Heart right ventricle (tissue), 16 donors: ENCODE measurements at regions of chr15 and their contacts with region 1.

Region 1: GRCh38 chr15:91611561-91612323 is 241.8 kb upstream of the SLCO3A1 start:
- DNase-seq: no peak
- ATAC-seq: no peak
- H3K4me3 ChIP-seq: no peak overlapping the region
- H3K27ac ChIP-seq: no peak overlapping the region
- H3K4me1 ChIP-seq: no peaks in the 10 kb centered on the region
- H3K27me3 ChIP-seq: no peaks in the 10 kb centered on the region
- CTCF ChIP-seq: no peak

Region 2: GRCh38 chr15:91291673-91292072 is 320.1 kb before region 1 on chr15:
- intact Hi-C with region 1: loop called in 1 of 10 experiments (anchors 10 kb)
- DNase-seq: peak in 1 of 2 donors; percentile 11
- ATAC-seq: peak in 4 of 8 donors; percentile 32 to 61 (median 50)
- H3K4me3 ChIP-seq: no peak overlapping the region
- H3K27ac ChIP-seq: no peak overlapping the region
- H3K4me1 ChIP-seq: peaks cover 0 to 3% (median 0%) of the 10 kb centered on the region in 9 donors
- H3K27me3 ChIP-seq: no peaks in the 10 kb centered on the region
- CTCF ChIP-seq: no peak

Region 3: GRCh38 chr15:91329914-91330313 is 281.8 kb before region 1 on chr15:
- intact Hi-C with region 1: no loop called
- DNase-seq: no peak
- ATAC-seq: no peak
- H3K4me3 ChIP-seq: no peak overlapping the region
- H3K27ac ChIP-seq: no peak overlapping the region
- H3K4me1 ChIP-seq: peaks cover 0 to 9% (median 0%) of the 10 kb centered on the region in 9 donors
- H3K27me3 ChIP-seq: no peaks in the 10 kb centered on the region
- CTCF ChIP-seq: no peak

Region 4: DNA sequence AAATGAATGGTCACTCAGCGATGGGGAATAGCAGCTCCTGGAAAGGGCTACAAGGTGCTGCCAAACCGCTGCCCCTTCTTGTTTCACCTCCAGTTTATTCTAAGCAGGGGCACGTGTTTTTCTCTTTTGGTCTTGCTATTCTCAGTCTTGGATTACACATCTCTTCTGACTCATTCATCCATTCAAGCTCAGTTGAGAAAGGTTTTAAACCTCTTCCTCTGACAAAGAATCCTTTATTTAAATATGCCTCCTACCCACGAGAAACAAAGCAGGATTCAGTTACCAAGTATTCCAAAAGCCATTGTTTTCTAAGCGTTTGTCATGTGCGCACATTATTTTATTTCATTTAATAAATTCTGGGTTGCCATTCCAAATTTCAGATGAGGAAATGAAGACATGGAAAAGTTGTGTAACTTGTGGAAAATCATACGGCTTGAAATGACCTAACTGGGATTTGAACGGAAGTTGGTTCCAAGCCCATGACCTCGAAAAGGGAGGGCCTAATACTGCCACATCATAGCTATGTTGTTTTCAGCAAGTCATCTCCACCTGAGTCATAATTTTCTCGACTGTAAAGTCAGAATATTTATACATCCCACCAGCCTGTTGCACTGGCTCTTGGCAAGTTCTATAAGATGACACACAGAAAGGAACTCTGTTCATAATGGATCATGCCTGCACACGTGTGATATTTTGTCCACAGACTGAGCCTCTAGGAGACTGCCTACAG is 50.2 kb before region 1 on chr15:
- intact Hi-C with region 1: loop called in 1 of 10 experiments (anchors 10 kb)
- DNase-seq: peak in 1 of 2 donors; percentile 52
- ATAC-seq: peak; percentile 34 to 90 (median 87)
- H3K4me3 ChIP-seq: no peak overlapping the region
- H3K27ac ChIP-seq: peak overlapping the region in 8 of 10 donors; percentile 21 to 74 (median 64)
- H3K4me1 ChIP-seq: peaks cover 0 to 21% (median 6%) of the 10 kb centered on the region in 9 donors
- H3K27me3 ChIP-seq: no peaks in the 10 kb centered on the region
- CTCF ChIP-seq: no peak

Region 5: DNA sequence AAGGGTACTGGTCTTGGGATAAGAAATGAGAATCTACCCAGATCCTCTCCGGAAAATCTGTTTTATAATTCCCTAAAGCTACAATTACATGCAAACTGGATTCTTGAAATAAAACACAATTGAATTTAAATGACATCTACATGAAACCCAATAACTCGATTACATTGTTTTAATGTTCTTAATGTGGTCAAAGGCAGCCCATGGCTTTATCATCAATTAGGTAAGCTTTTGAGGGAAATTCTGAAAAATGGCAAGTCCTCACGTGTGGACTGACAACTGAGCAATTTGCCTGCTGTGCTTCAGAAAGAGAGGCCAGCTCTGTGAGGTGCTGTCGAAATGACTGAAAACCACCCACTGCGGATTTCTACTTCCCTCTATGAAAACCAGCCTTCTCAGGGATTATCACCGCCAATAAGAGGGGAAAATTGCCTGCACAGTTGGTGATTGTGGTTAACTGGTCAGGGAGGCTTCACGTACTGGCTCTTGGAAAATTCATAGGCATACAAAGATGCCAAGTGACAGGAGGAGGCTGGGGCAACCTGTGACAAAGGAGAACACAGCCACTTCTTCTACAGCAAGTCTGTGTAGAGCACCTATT is 41.0 kb after region 1 on chr15:
- intact Hi-C with region 1: no loop called
- DNase-seq: no peak
- ATAC-seq: no peak
- H3K4me3 ChIP-seq: no peak overlapping the region
- H3K27ac ChIP-seq: no peak overlapping the region
- H3K4me1 ChIP-seq: no peaks in the 10 kb centered on the region
- H3K27me3 ChIP-seq: peaks cover 0 to 28% (median 4%) of the 10 kb centered on the region in 7 donors
- CTCF ChIP-seq: no peak